ENCODE measurements at regions of chr6 and their contacts with region 1.

Region 1: DNA sequence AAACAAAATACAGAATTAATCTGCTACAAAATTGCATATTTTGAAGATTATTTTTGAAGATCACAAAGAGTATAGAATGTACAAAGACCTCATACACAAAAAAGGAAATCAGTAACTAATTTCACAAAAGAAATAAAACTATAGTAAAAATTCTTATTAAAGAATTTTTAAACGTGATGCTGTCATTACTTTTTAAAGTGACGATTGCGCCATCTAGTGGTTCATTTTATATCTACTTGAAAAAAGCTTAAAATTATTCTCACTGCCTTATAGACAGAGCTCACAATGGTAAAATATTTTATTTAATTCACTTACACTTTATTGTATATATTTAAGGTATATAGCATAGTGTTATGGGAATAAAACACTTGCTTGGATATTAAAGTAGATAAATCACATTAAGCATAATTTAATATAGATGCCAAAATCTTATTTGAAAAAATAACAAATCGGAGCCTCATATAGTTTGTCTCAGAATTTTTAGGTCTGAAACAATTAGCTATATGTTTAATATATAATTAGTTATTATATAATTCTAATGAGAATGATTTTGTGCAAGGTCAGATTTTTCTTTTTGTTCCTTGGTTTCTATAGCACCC is 128.8 kb downstream of the PHF3 start:
- DNase-seq: no peak
- H3K4me3 ChIP-seq: no peak overlapping the region
- H3K27ac ChIP-seq: no peak overlapping the region
- H3K4me1 ChIP-seq: no peaks in the 10 kb centered on the region
- H3K27me3 ChIP-seq: no peaks in the 10 kb centered on the region
- CTCF ChIP-seq: peak; percentile 15 to 37

Region 2: GRCh38 chr6:63307581-63308246 is 456.7 kb before region 1 on chr6:
- CTCF ChIA-PET with region 1: no interaction called
- dilution Hi-C with region 1: no loop called
- in situ Hi-C with region 1: no loop called
- intact Hi-C with region 1: loop called (anchors 1 kb)
- DNase-seq: peak; percentile 37
- H3K4me3 ChIP-seq: no peak overlapping the region
- H3K27ac ChIP-seq: no peak overlapping the region
- H3K4me1 ChIP-seq: no peaks in the 10 kb centered on the region
- H3K27me3 ChIP-seq: no peaks in the 10 kb centered on the region
- CTCF ChIP-seq: peak; percentile 50 to 59

Region 3: GRCh38 chr6:63352587-63353285 is 411.7 kb before region 1 on chr6:
- CTCF ChIA-PET with region 1: interaction called, 12 read pairs
- dilution Hi-C with region 1: no loop called
- in situ Hi-C with region 1: loop called in 1 of 2 experiments (anchors 10 kb)
- intact Hi-C with region 1: loop called (anchors 1 kb)
- DNase-seq: peak; percentile 22
- H3K4me3 ChIP-seq: no peak overlapping the region
- H3K27ac ChIP-seq: no peak overlapping the region
- H3K4me1 ChIP-seq: peaks cover 10% of the 10 kb centered on the region
- H3K27me3 ChIP-seq: no peaks in the 10 kb centered on the region
- CTCF ChIP-seq: peak; percentile 68 to 76

Region 4: GRCh38 chr6:63609231-63609630 is 155.2 kb before region 1 on chr6:
- CTCF ChIA-PET with region 1: interaction called, 11 read pairs
- dilution Hi-C with region 1: loop called (anchors 25 kb)
- in situ Hi-C with region 1: no loop called
- intact Hi-C with region 1: no loop called
- DNase-seq: no peak
- H3K4me3 ChIP-seq: no peak overlapping the region
- H3K27ac ChIP-seq: no peak overlapping the region
- H3K4me1 ChIP-seq: no peaks in the 10 kb centered on the region
- H3K27me3 ChIP-seq: no peaks in the 10 kb centered on the region
- CTCF ChIP-seq: no peak

Region 5: DNA sequence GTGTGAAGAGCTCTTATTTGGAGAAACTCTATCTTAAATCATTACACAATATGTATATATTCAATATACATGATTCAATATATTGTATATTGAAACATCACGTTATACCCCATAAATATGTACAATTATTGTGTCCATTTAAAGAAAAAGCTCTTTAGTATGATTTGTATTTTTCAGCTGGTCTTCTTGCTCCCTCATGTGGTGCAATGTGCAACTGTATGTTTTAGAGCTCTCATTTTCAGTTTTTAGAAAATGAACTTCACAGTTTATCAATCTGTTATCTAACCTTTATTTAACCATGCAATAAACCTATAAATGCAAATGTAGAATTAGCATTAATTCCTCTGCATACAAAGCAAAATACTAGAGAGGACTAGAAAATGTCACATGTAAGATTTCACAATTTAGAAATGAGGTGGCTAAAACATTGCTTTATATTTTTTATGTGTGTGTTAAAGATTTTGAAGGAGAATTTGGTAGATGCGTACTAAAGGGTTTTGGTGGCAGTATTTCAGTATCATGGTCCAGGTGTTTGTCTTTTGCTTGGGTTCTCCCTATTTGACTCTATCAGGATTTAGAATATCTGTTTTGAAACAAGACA is 38.3 kb after region 1 on chr6:
- CTCF ChIA-PET with region 1: no interaction called
- dilution Hi-C with region 1: no loop called
- in situ Hi-C with region 1: no loop called
- intact Hi-C with region 1: loop called (anchors 5 kb)
- DNase-seq: no peak
- H3K4me3 ChIP-seq: no peak overlapping the region
- H3K27ac ChIP-seq: no peak overlapping the region
- H3K4me1 ChIP-seq: peaks cover 39% of the 10 kb centered on the region
- H3K27me3 ChIP-seq: no peaks in the 10 kb centered on the region
- CTCF ChIP-seq: peak; percentile 71

Region 6: DNA sequence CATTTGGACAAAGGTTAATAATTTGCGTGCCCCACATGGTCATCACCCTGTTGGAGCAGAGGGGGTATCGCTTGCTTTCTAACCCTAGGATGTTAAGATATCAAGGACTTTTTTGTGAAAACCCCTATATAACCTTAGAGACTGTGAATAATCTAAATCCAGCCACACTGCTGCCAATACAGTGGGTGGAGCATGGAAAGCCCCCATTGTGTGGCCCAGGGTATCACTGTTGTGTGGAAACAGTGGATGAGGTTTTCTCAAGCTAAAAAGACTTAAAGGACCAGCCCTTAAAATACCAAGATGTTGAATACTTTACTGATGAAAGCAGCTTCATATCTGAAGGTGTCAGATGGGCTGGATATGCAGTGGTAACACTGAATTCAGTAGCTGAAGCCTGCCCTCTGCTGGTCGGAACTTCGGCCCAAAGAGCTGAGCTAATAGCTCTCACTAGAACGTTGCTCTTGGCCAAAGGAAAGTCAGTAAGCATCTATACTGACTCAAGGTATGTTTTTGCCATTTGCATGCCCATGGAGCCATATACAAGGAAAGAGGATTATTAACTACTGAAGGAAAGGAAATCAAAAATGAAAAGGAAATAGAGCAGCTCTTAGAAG is 566.4 kb after region 1 on chr6:
- CTCF ChIA-PET with region 1: no interaction called
- dilution Hi-C with region 1: no loop called
- in situ Hi-C with region 1: no loop called
- intact Hi-C with region 1: no loop called
- DNase-seq: peak; percentile 14
- H3K4me3 ChIP-seq: no peak overlapping the region
- H3K27ac ChIP-seq: no peak overlapping the region
- H3K4me1 ChIP-seq: no peaks in the 10 kb centered on the region
- H3K27me3 ChIP-seq: no peaks in the 10 kb centered on the region
- CTCF ChIP-seq: peak; percentile 59 to 67

Measured in mammary epithelial cell (primary cell).